ENCODE measurements at regions of chr7 and their contacts with region 1.

Region 1: DNA sequence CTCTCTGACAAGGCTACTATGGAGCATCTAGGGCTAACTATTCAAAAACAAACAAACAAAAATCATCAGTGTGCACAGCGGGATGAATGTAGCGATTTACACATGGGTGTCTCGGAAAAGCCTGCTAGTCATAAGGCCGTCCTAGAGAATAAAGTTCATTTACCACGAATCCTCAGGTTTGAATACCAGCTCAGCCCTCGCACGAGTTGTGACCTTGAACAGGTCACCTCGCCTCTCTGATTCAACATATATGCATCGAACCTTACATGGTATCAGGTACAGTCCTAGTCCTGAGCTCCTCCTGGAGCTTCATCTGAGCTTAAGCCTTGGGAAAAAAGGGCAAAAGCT is 572 bp downstream of the ATP5MF start:
- DNase-seq: no peak
- H3K4me3 Mint-ChIP-seq: peak overlapping the region; percentile 96
- H3K27ac Mint-ChIP-seq: peak overlapping the region; percentile 88
- H3K4me1 Mint-ChIP-seq: peaks cover 20% of the 10 kb centered on the region
- H3K27me3 Mint-ChIP-seq: peaks cover 2% of the 10 kb centered on the region

Region 2: DNA sequence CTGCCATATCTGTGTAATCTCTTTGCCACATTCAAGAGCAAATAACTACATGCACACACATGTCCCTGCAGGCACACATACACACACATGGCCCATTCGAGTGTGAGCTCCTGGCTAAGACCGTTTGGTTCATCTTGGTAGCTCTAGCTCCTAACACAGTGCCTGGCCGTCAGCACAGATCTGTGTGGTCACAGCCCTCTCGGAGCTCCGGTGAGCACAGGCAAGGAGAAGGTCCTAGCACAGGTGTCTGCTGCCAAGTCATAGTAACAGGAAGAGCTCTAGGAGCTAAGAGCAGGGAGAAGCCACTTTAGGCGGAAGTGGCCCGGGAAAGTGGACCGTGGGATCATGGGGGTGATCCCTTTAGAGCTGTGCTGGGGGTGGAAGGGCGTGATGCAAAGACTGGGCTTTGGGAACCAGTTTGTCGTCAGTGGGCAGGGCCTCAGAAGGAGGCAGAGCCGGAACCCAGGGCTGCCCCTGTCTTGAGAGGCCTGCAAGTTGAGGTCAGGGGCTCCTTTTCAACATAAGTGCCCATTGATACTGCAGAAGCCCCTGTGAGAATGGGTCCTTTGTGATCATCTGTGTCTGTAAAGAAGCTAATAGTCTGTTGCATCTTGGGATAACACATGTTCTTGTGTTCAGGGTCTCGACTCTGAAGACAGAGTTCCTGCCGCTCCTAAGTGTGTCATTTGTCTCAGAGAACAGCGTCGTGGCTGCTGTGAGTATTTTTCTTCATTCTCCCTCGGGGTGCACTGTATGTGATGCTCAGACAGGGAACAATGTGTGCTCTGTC is 107.5 kb before region 1 on chr7:
- intact Hi-C with region 1: no loop called
- DNase-seq: no peak
- H3K4me3 Mint-ChIP-seq: no peak overlapping the region
- H3K27ac Mint-ChIP-seq: no peak overlapping the region
- H3K4me1 Mint-ChIP-seq: no peaks in the 10 kb centered on the region
- H3K27me3 Mint-ChIP-seq: no peaks in the 10 kb centered on the region

Region 3: DNA sequence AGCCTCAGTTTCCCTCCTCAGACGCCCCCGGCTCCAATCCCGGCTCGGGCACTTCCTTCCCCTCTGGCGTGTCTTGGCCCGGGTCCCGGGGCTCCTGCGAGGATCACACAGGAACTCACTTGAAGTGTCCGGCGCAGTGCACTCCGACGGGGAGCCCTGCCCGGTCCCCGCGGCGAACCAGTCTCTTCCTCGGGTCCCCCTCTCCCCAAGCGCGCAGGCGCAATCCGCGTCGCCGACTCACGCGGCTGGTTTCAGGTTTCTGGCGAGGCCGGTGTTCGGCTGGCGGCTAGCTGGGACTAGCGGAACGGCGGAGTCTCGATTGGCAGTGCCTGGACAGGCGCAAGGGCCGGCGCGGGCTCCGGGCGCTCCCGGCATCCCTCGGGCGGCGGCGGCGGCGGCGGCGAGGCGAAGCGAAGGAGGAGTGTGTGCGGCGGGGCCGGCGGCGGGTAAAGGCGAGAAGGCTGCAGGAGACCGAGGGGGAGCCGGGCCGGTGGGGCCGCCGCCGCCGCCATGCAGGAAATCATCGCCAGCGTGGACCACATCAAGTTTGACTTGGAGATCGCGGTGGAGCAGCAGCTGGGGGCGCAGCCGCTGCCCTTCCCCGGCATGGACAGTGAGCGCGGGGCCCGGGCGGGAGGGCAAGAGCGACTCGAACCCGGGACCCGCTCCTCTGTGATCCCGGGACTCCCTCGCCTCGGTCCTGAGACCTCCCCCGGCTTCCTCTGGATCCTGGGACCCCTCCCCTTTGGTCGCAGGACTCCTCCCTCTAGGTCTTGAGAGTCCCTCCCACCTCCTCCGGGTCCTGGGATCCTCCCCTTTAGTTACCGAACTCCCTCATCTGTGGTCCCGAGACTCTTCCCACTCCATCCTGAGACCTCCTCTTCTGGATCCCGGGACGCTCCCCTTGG is 26.6 kb before region 1 on chr7 and contains the starts of genes CPSF4 and PTCD1:
- intact Hi-C with region 1: loop called (anchors 1 kb)
- DNase-seq: peak; percentile 88
- H3K4me3 Mint-ChIP-seq: peak within 1 kb of the TSS; percentile 99
- H3K27ac Mint-ChIP-seq: peak within 1 kb of the TSS; percentile 92
- H3K4me1 Mint-ChIP-seq: peaks cover 24% of the 10 kb centered on the region
- H3K27me3 Mint-ChIP-seq: no peaks in the 10 kb centered on the region
- total RNA-seq, gene CPSF4: 88.4 and 89.9 TPM in 2 replicates
- total RNA-seq, gene PTCD1: 8.1 and 10.4 TPM in 2 replicates

Measured in activated T-helper 2 cell treated with anti-CD3 and anti-CD28 coated beads, Interferon-gamma antibody, Interleukin-2, Interleukin-4, amounts not matched to agents 10 μg/mL and 5 μg/mL and 100 μg/mL, durations not matched to agents 14 hours and 24 hours and 36 hours (primary cell).